CD4-positive, alpha-beta memory T cell (primary cell): ENCODE measurements at regions of chr5 and their contacts with region 1.

Region 1: DNA sequence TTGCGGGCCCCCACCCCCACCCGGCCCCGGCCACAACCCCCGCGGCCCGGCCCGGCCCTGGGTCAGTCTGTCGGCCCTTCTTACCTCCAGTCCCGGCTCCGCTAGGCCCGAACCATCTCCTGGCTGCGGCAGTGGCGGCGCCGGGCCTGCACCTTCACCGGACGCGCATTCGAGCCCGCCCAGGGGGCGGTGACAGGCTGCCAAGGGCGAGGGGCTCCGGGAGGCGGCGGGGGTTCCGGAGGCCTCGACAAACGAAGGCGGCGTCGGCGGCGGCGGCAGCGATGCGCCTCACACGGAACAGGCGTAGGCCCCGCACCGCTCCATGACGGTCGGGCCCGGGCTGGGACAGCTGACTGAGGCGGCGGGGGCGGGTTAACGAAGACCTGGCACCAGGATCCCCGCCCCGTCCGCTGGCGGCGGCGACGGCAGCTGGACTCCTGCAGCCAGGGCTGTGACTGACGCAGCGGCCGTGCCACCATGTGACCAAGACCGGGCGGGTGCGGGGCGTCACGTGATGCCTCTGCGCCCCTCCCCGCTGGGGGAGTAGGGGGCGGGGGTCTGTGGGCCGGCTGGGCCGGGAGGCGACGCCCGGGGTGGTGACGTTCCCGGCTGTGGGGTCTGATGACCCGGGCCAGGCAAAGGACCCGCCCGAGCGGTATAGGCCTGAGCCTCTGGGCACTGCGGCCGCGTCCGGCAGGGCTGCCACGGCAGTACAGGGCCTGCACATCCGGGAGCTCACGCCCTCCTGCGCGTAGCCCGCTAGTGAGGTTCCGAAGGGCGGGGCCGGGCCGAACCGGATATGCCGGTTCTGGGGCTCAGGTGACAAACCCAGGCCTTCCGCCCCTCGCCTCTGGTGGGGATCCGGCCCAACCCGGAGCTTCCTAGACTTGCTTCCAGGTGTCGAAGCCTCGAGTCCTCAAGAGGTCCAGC is at the start of gene AFF4:
- DNase-seq: peak; percentile 84 to 89 (median 87)
- H3K4me3 ChIP-seq: peak within 1 kb of the TSS; percentile 62 to 88
- H3K4me3 Mint-ChIP-seq: peak within 1 kb of the TSS; percentile 90 to 99 (median 98)
- H3K27ac ChIP-seq: peak within 1 kb of the TSS; percentile 91
- H3K27ac Mint-ChIP-seq: peak within 1 kb of the TSS; percentile 96 to 100 (median 100)
- H3K4me1 ChIP-seq: peaks cover 38% of the 10 kb centered on the region
- H3K4me1 Mint-ChIP-seq: peaks cover 20 to 45% (median 31%) of the 10 kb centered on the region in 4 donors
- H3K27me3 ChIP-seq: no peaks in the 10 kb centered on the region
- H3K27me3 Mint-ChIP-seq: no peaks in the 10 kb centered on the region
- total RNA-seq, gene AFF4: 60.4 to 61.6 TPM

Region 2: GRCh38 chr5:133025804-133026663 is 62.6 kb after region 1 on chr5 and contains the start of gene ZCCHC10:
- CTCF ChIA-PET with region 1: interaction called, 7 read pairs
- POLR2A ChIA-PET with region 1: interaction called, 19 read pairs
- intact Hi-C with region 1: loop called (anchors 1 kb)
- DNase-seq: peak; percentile 86 to 92 (median 87)
- H3K4me3 ChIP-seq: peak within 1 kb of the TSS; percentile 81 to 92
- H3K4me3 Mint-ChIP-seq: peak within 1 kb of the TSS; percentile 92 to 97 (median 96)
- H3K27ac ChIP-seq: peak within 1 kb of the TSS; percentile 98
- H3K27ac Mint-ChIP-seq: peak within 1 kb of the TSS; percentile 94 to 98 (median 97)
- H3K4me1 ChIP-seq: peaks cover 20% of the 10 kb centered on the region
- H3K4me1 Mint-ChIP-seq: peaks cover 14 to 30% (median 18%) of the 10 kb centered on the region in 4 donors
- H3K27me3 ChIP-seq: no peaks in the 10 kb centered on the region
- H3K27me3 Mint-ChIP-seq: no peaks in the 10 kb centered on the region
- total RNA-seq, gene ZCCHC10: 20.1 to 20.6 TPM

Region 3: DNA sequence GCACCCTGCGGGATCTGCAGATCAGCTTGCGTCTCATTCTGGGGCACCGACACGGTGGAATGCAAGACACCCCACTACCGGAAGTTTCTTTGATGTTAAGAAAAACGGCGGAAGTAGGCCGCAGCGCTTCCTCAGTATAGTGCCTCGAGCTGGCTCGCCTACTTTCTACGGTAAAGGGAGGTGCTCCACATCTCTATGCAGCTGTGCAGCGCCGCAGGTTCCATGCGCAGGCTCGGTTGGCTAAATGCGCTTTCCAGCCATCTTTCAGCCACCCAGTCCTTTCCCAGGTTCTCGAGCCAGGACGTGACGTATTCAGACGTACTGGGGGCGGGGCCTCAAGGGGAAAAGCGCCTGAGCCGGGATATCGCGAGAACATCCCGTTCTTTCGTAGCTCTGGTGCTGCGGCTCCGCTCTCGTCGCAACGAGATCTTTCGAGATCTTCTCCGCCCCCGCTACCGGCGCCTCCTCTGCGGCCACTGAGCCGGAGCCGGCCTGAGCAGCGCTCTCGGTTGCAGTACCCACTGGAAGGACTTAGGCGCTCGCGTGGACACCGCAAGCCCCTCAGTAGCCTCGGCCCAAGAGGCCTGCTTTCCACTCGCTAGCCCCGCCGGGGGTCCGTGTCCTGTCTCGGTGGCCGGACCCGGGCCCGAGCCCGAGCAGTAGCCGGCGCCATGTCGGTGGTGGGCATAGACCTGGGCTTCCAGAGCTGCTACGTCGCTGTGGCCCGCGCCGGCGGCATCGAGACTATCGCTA is 88.3 kb after region 1 on chr5 and contains the start of gene HSPA4:
- CTCF ChIA-PET with region 1: interaction called, 3 read pairs
- POLR2A ChIA-PET with region 1: interaction called, 55 read pairs
- intact Hi-C with region 1: loop called (anchors 1 kb)
- DNase-seq: peak; percentile 97 to 99 (median 98)
- H3K4me3 ChIP-seq: peak within 1 kb of the TSS; percentile 97 to 99
- H3K4me3 Mint-ChIP-seq: peak within 1 kb of the TSS; percentile 96 to 99 (median 98)
- H3K27ac ChIP-seq: peak within 1 kb of the TSS; percentile 99
- H3K27ac Mint-ChIP-seq: peak within 1 kb of the TSS; percentile 99 to 100 (median 100)
- H3K4me1 ChIP-seq: peaks cover 54% of the 10 kb centered on the region
- H3K4me1 Mint-ChIP-seq: peaks cover 31 to 65% (median 49%) of the 10 kb centered on the region in 4 donors
- H3K27me3 ChIP-seq: no peaks in the 10 kb centered on the region
- H3K27me3 Mint-ChIP-seq: no peaks in the 10 kb centered on the region
- total RNA-seq, gene HSPA4: 55.9 to 58.1 TPM